A549 (cell line): ENCODE measurements at regions of chr14 and their contacts with region 1.

Region 1: DNA sequence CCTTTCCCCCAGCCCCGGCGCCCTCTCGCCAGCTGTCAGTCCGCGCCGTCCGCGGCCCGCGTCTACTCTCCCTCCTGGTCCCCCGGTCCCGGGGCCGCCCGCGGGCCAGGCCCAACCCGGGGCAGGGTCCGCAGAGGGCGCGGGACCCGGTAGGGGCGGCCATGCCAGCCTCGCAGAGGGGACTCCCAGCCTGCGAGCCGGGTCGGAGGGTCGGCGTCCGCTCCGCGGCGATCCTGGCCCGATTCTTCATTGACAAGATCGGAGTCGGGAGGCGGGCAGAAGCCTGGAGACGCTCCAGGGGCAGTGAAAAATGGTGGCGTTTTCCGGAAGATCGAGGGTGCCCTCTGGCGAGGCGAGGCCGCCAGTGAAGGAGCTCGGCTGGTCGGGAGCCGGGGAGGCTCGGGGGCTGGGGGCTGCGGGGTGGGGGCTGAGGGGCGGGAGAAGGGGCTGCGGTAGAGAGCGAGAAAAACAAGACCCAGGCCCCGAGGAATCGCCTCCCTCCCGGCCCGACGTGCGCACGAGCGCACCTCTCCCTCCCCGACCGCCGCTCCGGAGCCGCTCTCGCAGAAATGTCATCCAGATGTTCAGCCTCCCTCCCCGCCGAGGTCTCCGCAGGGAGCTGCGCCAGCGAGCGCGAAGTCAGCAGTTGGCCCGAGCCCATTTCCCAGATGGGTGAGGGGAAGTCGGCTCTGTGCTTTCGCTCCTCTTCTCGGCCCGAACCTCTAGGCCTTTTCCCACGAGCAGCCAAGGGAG is 647 bp upstream of the TGFB3 start:
- DNase-seq: peak; percentile 73 to 74
- ATAC-seq: peak; percentile 75 to 88
- H3K4me3 ChIP-seq: peak overlapping the region; percentile 74
- H3K27ac ChIP-seq: peak overlapping the region; percentile 66 to 83
- H3K4me1 ChIP-seq: peaks cover 22% of the 10 kb centered on the region; the same call in 2 of the 3 replicates
- CTCF ChIP-seq: peak; percentile 68
- EP300 ChIP-seq: no peak
- POLR2A ChIP-seq: no peak
- RAD21 ChIP-seq: peak; percentile 79 to 93

Region 2: GRCh38 chr14:75497191-75497590 is 485.3 kb before region 1 on chr14:
- CTCF ChIA-PET with region 1: no interaction called
- POLR2A ChIA-PET with region 1: no interaction called
- DNase-seq: no peak
- ATAC-seq: no peak
- H3K4me3 ChIP-seq: no peak overlapping the region
- H3K27ac ChIP-seq: no peak overlapping the region
- H3K4me1 ChIP-seq: peaks cover 13% of the 10 kb centered on the region; the same call in 2 of the 3 replicates
- CTCF ChIP-seq: no peak
- EP300 ChIP-seq: no peak
- POLR2A ChIP-seq: no peak
- RAD21 ChIP-seq: no peak

Region 3: GRCh38 chr14:75654127-75654732 is 328.2 kb before region 1 on chr14:
- CTCF ChIA-PET with region 1: interaction called, 11 read pairs
- POLR2A ChIA-PET with region 1: no interaction called
- DNase-seq: peak; percentile 66 to 86
- ATAC-seq: peak; percentile 93 to 98
- H3K4me3 ChIP-seq: no peak overlapping the region
- H3K27ac ChIP-seq: peak overlapping the region; percentile 2 to 24; a peak in 1 of 6 replicates
- H3K4me1 ChIP-seq: peaks cover 16% of the 10 kb centered on the region; the same call in 2 of the 3 replicates
- CTCF ChIP-seq: peak; percentile 94
- EP300 ChIP-seq: no peak
- POLR2A ChIP-seq: no peak
- RAD21 ChIP-seq: peak; percentile 91 to 95

Region 4: GRCh38 chr14:75738192-75738591 is 244.2 kb before region 1 on chr14:
- CTCF ChIA-PET with region 1: interaction called, 11 read pairs
- POLR2A ChIA-PET with region 1: no interaction called
- DNase-seq: no peak
- ATAC-seq: no peak
- H3K4me3 ChIP-seq: no peak overlapping the region
- H3K27ac ChIP-seq: no peak overlapping the region; a peak in 1 of 6 replicates
- H3K4me1 ChIP-seq: peaks cover 6% of the 10 kb centered on the region; the same call in 2 of the 3 replicates
- CTCF ChIP-seq: no peak
- EP300 ChIP-seq: no peak
- POLR2A ChIP-seq: no peak
- RAD21 ChIP-seq: no peak

Region 5: DNA sequence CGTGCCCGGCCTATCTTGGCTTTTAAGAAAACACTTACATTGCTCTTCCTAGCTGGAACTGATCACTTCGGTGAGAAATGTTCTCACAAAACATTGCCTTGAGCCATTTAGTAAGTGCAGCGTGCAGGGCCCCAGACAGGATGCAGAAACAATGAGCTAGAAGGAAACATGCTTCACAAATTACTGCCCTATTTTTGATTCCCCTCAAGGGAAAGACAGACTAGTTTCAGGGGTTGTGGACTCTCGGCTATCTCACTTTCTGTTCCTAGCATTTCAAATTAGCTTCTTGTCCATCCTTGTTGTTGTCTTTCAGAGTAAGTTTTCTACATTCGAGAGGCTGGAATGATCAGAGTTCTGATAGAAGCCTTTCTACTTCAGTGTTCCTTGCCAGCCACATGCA is 22.2 kb before region 1 on chr14:
- CTCF ChIA-PET with region 1: interaction called, 11 read pairs
- POLR2A ChIA-PET with region 1: no interaction called
- DNase-seq: no peak
- ATAC-seq: no peak
- H3K4me3 ChIP-seq: no peak overlapping the region
- H3K27ac ChIP-seq: no peak overlapping the region
- H3K4me1 ChIP-seq: no peaks in the 10 kb centered on the region
- CTCF ChIP-seq: no peak
- EP300 ChIP-seq: no peak
- POLR2A ChIP-seq: no peak
- RAD21 ChIP-seq: no peak

Region 6: DNA sequence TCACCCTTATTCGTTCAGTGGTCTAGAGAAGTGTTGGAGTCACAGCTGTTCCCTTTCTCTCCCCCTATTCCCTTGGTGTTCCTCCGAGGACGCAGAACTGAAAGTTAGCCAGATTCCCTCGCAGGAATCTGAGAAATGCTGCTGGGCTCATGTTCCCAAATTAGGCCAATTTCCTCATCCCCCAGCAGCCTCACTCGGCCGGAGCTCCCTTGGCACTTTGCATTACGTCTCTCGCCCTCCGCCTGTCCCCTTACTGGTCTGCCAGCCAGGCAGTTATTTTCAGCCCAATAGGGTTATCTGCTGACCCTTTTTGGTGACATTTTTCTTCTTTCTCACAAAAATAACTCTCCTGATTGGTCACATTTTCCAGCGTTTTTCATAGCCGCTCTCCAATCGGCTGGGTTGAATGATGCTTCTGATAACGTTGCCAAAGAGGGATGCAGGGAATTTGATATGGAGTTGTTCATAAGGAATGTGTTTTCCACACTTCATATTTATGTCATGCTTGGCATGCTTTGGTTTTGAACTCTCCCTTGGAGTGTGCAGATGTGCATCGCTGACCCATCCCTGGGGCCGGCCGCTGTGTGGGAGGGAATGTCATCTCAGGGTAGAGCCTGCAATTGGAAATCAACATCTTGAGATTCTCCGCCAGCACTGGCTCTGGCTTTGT is 13.1 kb after region 1 on chr14:
- CTCF ChIA-PET with region 1: interaction called, 16 read pairs
- POLR2A ChIA-PET with region 1: no interaction called
- DNase-seq: no peak
- ATAC-seq: no peak
- H3K4me3 ChIP-seq: no peak overlapping the region
- H3K27ac ChIP-seq: no peak overlapping the region
- H3K4me1 ChIP-seq: no peaks in the 10 kb centered on the region
- CTCF ChIP-seq: no peak
- EP300 ChIP-seq: no peak
- POLR2A ChIP-seq: no peak
- RAD21 ChIP-seq: no peak